Caco-2 (cell line): ENCODE measurements at regions of chr6 and their contacts with region 1.

Region 1: GRCh38 chr6:135291288-135292116 is 110.4 kb downstream of the MYB start:
- DNase-seq: peak; percentile 43 to 57
- H3K4me3 ChIP-seq: no peak overlapping the region
- H3K4me3 Mint-ChIP-seq: no peak overlapping the region
- H3K27ac Mint-ChIP-seq: no peak overlapping the region
- H3K4me1 ChIP-seq: peaks cover 15% of the 10 kb centered on the region
- H3K4me1 Mint-ChIP-seq: no peaks in the 10 kb centered on the region
- H3K27me3 ChIP-seq: no peaks in the 10 kb centered on the region
- H3K27me3 Mint-ChIP-seq: no peaks in the 10 kb centered on the region
- CTCF ChIP-seq: no peak

Region 2: DNA sequence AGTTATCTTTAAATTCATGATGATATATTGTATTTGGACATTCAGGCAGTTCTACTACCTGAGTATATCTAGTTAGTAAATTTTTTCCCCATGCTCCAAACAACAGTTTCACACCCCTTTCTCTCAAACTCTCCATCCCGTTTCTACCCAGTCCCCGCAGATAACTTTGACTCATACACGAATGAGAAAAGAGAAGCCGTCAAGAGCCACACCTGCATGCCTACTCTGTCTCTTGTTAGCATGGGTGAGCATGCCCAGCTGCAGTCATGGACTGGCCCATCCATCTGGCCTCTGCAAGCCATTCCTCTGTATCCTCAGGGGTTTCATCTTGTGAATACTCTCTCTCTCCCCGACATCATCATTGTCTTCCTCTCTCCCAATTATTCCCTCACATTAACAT is 68.9 kb before region 1 on chr6:
- CTCF ChIA-PET with region 1: no interaction called
- POLR2A ChIA-PET with region 1: no interaction called
- intact Hi-C with region 1: no loop called
- DNase-seq: no peak
- H3K4me3 ChIP-seq: no peak overlapping the region
- H3K4me3 Mint-ChIP-seq: no peak overlapping the region
- H3K27ac Mint-ChIP-seq: no peak overlapping the region
- H3K4me1 ChIP-seq: 0 out of 2 replicates have a peak, but pooled peaks cover 7% of the 10 kb centered on the region
- H3K4me1 Mint-ChIP-seq: peaks cover 13% of the 10 kb centered on the region
- H3K27me3 ChIP-seq: no peaks in the 10 kb centered on the region
- H3K27me3 Mint-ChIP-seq: no peaks in the 10 kb centered on the region
- CTCF ChIP-seq: no peak

Region 3: DNA sequence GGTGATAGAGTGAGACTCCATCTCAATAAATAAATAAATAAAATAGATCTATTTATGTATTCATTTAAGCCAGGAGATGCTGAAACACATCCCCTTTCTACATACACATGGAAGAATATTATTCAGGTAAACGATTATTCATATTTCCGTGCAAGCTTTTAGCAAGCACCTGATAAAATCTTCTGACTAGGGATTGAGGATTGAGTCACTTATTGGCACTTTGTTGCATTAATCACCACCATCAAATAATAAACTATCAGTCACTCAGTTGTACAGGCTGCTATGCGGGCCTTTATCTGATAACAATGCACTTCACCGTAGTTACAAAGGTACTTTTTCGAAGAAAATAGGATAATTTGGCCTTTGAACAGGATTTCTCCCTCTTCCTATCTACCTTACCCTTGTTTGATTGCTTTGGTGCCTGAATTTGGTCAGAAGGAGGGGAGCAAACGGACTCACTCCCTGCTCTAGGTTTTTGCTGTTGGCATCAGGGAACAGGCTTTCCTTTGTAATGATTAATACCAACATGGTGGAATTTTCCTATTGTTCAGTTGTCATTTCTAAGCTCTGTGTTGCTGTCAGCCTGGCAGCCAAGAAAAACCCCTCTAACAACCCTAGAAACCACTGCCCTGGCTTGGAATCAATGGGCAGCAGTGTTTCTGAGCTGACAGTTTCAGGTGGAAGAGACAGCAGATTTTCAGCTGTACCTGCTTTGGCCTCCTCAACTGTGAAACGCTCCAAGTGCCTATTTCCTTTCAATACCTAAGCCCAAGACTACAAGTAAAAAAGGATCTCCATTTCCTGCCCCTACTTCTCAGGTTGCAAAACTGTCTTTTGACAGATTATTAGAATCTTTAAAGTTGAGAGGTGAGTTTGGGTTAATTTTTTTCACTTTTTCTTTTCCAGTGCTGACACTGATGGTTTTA is 47.4 kb before region 1 on chr6:
- CTCF ChIA-PET with region 1: no interaction called
- POLR2A ChIA-PET with region 1: no interaction called
- intact Hi-C with region 1: no loop called
- DNase-seq: no peak
- H3K4me3 ChIP-seq: no peak overlapping the region
- H3K4me3 Mint-ChIP-seq: no peak overlapping the region
- H3K27ac Mint-ChIP-seq: no peak overlapping the region
- H3K4me1 ChIP-seq: no peaks in the 10 kb centered on the region
- H3K4me1 Mint-ChIP-seq: no peaks in the 10 kb centered on the region
- H3K27me3 ChIP-seq: no peaks in the 10 kb centered on the region
- H3K27me3 Mint-ChIP-seq: no peaks in the 10 kb centered on the region
- CTCF ChIP-seq: no peak

Region 4: DNA sequence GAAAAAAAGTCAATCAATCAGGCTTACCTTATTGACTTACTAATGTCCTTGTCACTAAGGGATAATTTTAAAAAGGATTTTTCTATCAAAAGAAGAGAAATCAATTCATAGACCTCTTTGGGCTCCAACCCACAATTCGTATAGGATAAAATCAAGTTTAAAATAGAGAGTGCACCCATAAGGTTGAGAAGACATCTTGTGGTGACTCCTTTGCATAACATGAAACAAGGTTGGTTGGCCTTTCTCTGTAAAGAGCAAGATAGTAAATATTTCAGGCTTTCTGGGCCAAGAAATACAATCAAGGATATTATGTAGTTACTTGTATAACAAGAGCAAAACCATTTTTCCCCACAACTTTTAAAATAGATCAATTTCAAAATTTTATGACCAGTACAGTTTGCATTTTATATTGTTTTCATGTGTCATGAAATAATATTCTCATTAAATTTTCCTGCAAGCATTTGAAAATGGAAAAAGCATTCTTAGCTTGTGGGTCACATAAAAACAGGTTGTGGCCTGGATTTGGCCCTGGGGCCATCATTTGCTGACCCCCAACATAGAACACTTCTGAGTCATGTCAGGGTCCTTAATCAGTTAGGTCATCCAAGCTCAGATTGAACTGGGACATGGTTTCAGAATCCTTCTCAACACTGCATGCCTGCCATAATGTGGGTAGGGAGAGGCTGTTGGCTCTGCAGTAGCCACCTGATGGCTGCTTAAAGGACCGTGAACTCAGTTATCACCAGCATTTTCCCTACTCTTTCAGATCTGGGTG is 33.7 kb before region 1 on chr6:
- CTCF ChIA-PET with region 1: interaction called, 11 read pairs
- POLR2A ChIA-PET with region 1: no interaction called
- intact Hi-C with region 1: no loop called
- DNase-seq: no peak
- H3K4me3 ChIP-seq: no peak overlapping the region
- H3K4me3 Mint-ChIP-seq: no peak overlapping the region
- H3K27ac Mint-ChIP-seq: no peak overlapping the region
- H3K4me1 ChIP-seq: no peaks in the 10 kb centered on the region
- H3K4me1 Mint-ChIP-seq: peaks cover 14% of the 10 kb centered on the region
- H3K27me3 ChIP-seq: no peaks in the 10 kb centered on the region
- H3K27me3 Mint-ChIP-seq: peaks cover 4% of the 10 kb centered on the region
- CTCF ChIP-seq: no peak